ENCODE measurements at regions of chr4 and their contacts with region 1.

Region 1: GRCh38 chr4:101730291-101731117 is 60.0 kb upstream of the BANK1 start:
- DNase-seq: peak; percentile 53
- H3K4me3 ChIP-seq: no peak overlapping the region
- H3K27ac ChIP-seq: no peak overlapping the region
- H3K4me1 ChIP-seq: no peaks in the 10 kb centered on the region
- H3K27me3 ChIP-seq: no peaks in the 10 kb centered on the region
- CTCF ChIP-seq: peak; percentile 64 to 81

Region 2: DNA sequence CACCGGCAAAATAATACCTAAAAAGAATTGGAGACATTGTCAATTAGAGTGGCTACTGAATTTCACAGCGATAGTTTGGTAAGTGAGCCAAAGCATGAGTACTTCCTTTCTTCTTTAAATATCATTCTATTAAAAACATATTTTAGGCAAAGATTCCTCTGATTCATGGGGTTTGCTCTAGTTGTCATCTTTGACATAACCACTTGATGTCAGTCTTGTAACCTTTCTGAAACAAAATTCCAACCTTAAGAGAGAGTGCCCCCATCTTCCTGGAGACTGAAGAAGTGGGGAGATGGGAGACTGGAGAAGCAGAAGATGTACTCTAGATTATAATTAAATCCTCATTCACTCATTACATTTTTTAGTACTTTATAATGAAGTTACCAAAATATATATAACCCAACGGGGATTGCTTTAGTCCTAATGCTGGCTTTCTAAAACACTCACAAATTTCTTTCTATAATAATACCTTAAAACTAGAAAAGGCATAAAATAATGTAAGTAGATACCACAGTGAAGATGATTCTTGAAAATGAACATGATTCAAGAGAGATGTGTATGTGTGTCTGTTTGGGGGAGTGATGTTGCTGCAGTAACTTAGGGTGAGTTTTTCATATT is 1309.0 kb before region 1 on chr4:
- CTCF ChIA-PET with region 1: no interaction called
- dilution Hi-C with region 1: no loop called
- in situ Hi-C with region 1: no loop called
- intact Hi-C with region 1: loop called (anchors 2 kb)
- DNase-seq: peak; percentile 30
- H3K4me3 ChIP-seq: no peak overlapping the region
- H3K27ac ChIP-seq: no peak overlapping the region
- H3K4me1 ChIP-seq: peaks cover 8% of the 10 kb centered on the region
- H3K27me3 ChIP-seq: no peaks in the 10 kb centered on the region
- CTCF ChIP-seq: peak; percentile 58 to 67

Region 3: GRCh38 chr4:100907465-100908454 is 822.7 kb before region 1 on chr4:
- CTCF ChIA-PET with region 1: no interaction called
- dilution Hi-C with region 1: no loop called
- in situ Hi-C with region 1: no loop called
- intact Hi-C with region 1: loop called (anchors 1 kb)
- DNase-seq: peak; percentile 23
- H3K4me3 ChIP-seq: no peak overlapping the region
- H3K27ac ChIP-seq: no peak overlapping the region
- H3K4me1 ChIP-seq: no peaks in the 10 kb centered on the region
- H3K27me3 ChIP-seq: no peaks in the 10 kb centered on the region
- CTCF ChIP-seq: peak; percentile 36 to 45

Region 4: DNA sequence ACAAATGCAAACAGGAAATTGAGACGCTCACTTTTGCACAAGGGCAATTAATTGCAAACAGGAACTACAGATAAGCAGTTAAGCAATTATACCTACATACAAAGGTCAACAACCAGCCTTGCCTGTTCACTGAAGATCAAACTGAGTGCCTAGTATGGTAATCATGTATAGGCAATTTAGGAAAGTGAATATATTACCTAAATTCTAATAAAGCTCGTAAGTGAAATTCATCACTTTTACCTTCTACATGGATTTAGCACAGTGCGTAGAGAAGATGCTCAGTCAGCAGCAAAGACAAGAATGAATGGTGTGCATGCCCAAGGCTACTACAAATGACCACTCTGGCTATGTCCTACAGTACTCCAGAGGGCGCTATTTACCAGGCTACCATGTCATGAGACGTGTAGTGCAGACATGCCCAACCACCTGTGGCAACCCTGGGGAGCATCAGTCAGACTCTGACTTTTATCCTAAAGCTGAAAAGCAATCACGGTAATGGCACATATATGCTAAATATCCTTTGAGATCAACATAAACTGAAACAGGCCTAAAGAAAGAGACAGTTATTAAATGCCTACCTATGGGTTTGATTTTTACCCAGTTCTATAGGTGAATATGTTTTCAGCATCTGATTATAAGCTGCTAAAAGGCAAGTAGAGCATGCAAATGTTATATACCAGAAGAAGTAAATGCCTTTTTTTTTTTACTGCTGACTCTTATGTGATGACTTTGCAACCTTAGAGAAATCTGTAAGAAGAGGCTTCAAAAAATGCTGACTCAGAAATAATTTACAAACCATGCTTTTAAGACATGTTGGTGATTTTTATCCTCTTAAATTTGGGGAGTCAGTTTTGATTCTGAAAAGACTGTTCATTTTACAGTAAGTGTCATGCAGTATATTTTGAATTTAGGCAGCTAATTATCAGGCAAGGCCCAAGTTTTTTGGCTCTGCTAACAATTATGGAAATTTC is 561.2 kb before region 1 on chr4:
- CTCF ChIA-PET with region 1: no interaction called
- dilution Hi-C with region 1: no loop called
- in situ Hi-C with region 1: loop called in 1 of 2 experiments (anchors 25 kb)
- intact Hi-C with region 1: loop called (anchors 1 kb)
- DNase-seq: peak; percentile 58
- H3K4me3 ChIP-seq: no peak overlapping the region
- H3K27ac ChIP-seq: no peak overlapping the region
- H3K4me1 ChIP-seq: peaks cover 28% of the 10 kb centered on the region
- H3K27me3 ChIP-seq: no peaks in the 10 kb centered on the region
- CTCF ChIP-seq: peak; percentile 80 to 83

Region 5: GRCh38 chr4:101187841-101188240 is 542.7 kb before region 1 on chr4:
- CTCF ChIA-PET with region 1: no interaction called
- dilution Hi-C with region 1: no loop called
- in situ Hi-C with region 1: no loop called
- intact Hi-C with region 1: loop called (anchors 5 kb)
- DNase-seq: no peak
- H3K4me3 ChIP-seq: no peak overlapping the region
- H3K27ac ChIP-seq: no peak overlapping the region
- H3K4me1 ChIP-seq: peaks cover 18% of the 10 kb centered on the region
- H3K27me3 ChIP-seq: no peaks in the 10 kb centered on the region
- CTCF ChIP-seq: peak; percentile 29 to 52

Region 6: GRCh38 chr4:101563126-101563525 is 167.4 kb before region 1 on chr4:
- CTCF ChIA-PET with region 1: no interaction called
- dilution Hi-C with region 1: no loop called
- in situ Hi-C with region 1: no loop called
- intact Hi-C with region 1: loop called (anchors 10 kb)
- DNase-seq: no peak
- H3K4me3 ChIP-seq: no peak overlapping the region
- H3K27ac ChIP-seq: no peak overlapping the region
- H3K4me1 ChIP-seq: no peaks in the 10 kb centered on the region
- H3K27me3 ChIP-seq: peaks cover 2% of the 10 kb centered on the region
- CTCF ChIP-seq: no peak

Region 7: DNA sequence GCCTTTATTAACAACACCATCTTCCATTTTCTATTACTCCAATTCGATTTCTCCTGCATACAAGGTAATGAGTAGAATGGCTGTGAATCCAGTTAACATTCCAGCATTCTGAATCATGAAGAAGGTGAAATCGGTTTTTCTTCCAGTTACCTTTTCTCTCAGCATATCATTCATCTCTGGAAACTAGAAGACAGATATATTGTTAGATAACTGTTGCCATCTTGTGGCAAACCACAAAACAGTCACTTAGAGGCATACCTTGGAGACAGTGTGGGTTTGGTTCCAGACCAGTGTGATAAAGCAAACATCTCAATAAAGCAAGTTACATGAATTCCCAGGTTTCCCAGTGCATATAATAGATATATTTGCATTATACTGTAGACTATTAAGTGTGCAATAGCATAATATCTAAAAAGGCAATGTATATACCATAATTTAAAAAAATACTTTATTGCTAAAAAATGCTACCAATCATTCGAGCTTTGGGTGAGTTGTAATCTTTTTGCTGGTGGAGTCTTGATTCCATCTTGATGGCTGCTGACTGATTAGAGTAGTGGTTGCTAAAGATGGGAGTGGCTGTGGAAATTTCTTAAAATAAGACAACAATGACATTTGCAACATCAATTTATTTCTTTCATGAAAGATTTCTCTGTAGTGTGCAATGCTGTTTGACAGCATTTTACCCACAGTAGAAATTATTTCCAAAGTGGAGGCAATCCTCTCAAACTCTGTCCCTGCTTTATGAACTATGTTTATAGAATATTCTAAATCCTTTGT is 532.7 kb after region 1 on chr4:
- CTCF ChIA-PET with region 1: no interaction called
- dilution Hi-C with region 1: no loop called
- in situ Hi-C with region 1: no loop called
- intact Hi-C with region 1: loop called (anchors 1 kb)
- DNase-seq: peak; percentile 70
- H3K4me3 ChIP-seq: no peak overlapping the region
- H3K27ac ChIP-seq: no peak overlapping the region
- H3K4me1 ChIP-seq: no peaks in the 10 kb centered on the region
- H3K27me3 ChIP-seq: no peaks in the 10 kb centered on the region
- CTCF ChIP-seq: peak; percentile 50 to 62